ENCODE measurements at regions of chr19 and their contacts with region 1.

Region 1: DNA sequence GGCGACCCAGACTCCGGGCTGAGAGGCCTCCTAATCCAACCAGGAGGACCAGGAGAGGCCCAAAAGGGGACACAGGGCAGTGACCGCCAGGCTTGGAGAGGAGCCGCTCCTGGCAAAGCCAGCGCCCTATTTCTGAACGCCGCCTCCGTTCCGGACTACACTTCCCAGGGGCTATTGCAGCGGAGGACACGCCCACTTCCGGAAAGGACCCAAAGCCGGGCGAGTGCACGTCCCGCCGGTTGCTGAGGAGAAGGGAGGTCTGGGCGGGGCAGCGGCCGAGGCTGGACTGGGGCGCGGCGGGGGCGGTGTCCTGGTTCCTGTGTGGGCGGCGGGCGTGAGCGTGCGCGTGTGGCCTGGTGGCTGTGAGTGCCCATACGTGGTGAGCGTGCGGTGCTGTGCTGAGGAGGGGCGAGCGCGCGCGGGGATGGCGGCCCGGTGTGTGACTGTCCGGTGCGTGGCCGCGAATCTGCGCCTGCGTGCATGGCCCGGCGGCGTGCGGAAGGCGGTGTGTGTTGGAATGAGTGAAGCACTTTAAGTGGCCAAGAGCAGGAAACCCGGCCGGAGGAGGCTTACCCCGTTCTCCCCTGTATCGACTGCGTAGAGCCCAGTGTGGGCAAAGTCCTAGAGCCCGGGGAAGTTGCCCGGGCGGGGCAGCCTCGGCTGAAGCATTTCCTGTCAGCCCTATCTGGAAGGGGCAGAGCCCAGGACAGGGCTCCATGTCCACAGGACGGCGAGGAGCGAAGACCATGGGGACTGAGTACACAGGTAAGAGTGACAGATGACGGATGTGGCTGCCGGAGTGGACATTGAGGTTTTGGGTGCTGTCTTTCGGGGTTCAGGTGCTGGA is at the start of gene ZNF470:
- DNase-seq: peak; percentile 96
- H3K4me3 Mint-ChIP-seq: peak within 1 kb of the TSS; percentile 97
- H3K27ac Mint-ChIP-seq: peak within 1 kb of the TSS; percentile 90
- H3K4me1 Mint-ChIP-seq: peaks cover 7% of the 10 kb centered on the region
- H3K27me3 Mint-ChIP-seq: no peaks in the 10 kb centered on the region
- total RNA-seq, gene ZNF470: 1.8 and 2.0 TPM in 2 replicates

Region 2: GRCh38 chr19:56393119-56394012 is 174.1 kb before region 1 on chr19 and contains the start of gene ZNF582:
- intact Hi-C with region 1: no loop called
- DNase-seq: peak; percentile 96
- H3K4me3 Mint-ChIP-seq: peak within 1 kb of the TSS; percentile 91
- H3K27ac Mint-ChIP-seq: peak within 1 kb of the TSS; percentile 84
- H3K4me1 Mint-ChIP-seq: peaks cover 5% of the 10 kb centered on the region
- H3K27me3 Mint-ChIP-seq: no peaks in the 10 kb centered on the region
- total RNA-seq, gene ZNF582: 1.0 and 2.1 TPM in 2 replicates

Region 3: GRCh38 chr19:56403764-56404704 is 163.5 kb before region 1 on chr19 and contains the start of gene ZNF583:
- intact Hi-C with region 1: loop called (anchors 2 kb)
- DNase-seq: peak; percentile 96
- H3K4me3 Mint-ChIP-seq: peak within 1 kb of the TSS; percentile 84
- H3K27ac Mint-ChIP-seq: peak within 1 kb of the TSS; percentile 95
- H3K4me1 Mint-ChIP-seq: peaks cover 21% of the 10 kb centered on the region
- H3K27me3 Mint-ChIP-seq: no peaks in the 10 kb centered on the region
- total RNA-seq, gene ZNF583: 1.9 and 2.0 TPM in 2 replicates

Region 4: GRCh38 chr19:56491399-56491798 is 76.1 kb before region 1 on chr19:
- intact Hi-C with region 1: no loop called
- DNase-seq: no peak
- H3K4me3 Mint-ChIP-seq: no peak overlapping the region
- H3K27ac Mint-ChIP-seq: no peak overlapping the region
- H3K4me1 Mint-ChIP-seq: no peaks in the 10 kb centered on the region
- H3K27me3 Mint-ChIP-seq: no peaks in the 10 kb centered on the region

Region 5: GRCh38 chr19:56538254-56538760 is 29.2 kb before region 1 on chr19:
- intact Hi-C with region 1: loop called (anchors 1 kb)
- DNase-seq: peak; percentile 95
- H3K4me3 Mint-ChIP-seq: peak overlapping the region; percentile 86
- H3K27ac Mint-ChIP-seq: peak overlapping the region; percentile 91
- H3K4me1 Mint-ChIP-seq: peaks cover 8% of the 10 kb centered on the region
- H3K27me3 Mint-ChIP-seq: no peaks in the 10 kb centered on the region

Region 6: DNA sequence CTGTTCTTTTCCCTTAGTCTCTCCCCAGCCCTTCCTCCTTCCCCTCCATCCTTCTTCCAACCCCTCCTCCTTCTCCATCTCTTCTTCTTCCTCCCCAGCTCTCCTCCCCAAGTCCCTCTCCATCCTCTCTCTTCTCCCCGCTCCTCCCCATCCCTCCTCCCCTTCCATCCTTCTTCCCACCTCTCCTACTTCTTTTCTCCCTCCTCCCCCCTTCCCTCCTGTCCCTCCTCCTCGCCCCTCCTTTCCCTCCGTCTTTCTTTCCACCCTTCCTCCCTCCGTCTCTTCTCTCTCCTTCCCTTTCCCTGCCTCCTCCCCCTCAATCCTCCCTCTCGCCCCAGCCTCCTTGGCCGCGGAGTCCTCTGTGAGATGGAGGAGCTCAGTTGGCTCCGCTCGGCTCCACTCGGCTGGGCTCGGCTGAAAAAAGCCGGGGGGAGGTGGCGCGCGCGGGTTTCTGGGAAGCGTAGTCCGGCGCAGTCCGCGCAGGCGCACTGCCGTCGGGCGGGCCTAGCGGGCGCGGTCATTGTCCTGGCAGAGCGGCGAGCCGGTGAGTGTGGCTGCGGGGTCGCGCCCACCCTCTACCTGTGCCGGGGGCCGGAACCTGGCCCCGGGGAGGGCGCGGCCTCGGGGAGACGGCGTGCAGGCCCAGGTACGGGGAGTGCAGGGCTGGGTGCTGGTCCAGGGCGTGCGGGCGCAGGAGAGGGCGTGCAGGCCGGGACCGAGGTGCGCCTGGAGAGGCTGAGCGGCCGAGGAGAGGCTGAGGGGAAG is 27.5 kb after region 1 on chr19 and contains the start of gene ZNF71:
- intact Hi-C with region 1: loop called (anchors 1 kb)
- DNase-seq: peak; percentile 96
- H3K4me3 Mint-ChIP-seq: peak within 1 kb of the TSS; percentile 90
- H3K27ac Mint-ChIP-seq: peak within 1 kb of the TSS; percentile 60
- H3K4me1 Mint-ChIP-seq: peaks cover 12% of the 10 kb centered on the region
- H3K27me3 Mint-ChIP-seq: no peaks in the 10 kb centered on the region
- total RNA-seq, gene ZNF71: 4.2 and 5.2 TPM in 2 replicates

Region 7: DNA sequence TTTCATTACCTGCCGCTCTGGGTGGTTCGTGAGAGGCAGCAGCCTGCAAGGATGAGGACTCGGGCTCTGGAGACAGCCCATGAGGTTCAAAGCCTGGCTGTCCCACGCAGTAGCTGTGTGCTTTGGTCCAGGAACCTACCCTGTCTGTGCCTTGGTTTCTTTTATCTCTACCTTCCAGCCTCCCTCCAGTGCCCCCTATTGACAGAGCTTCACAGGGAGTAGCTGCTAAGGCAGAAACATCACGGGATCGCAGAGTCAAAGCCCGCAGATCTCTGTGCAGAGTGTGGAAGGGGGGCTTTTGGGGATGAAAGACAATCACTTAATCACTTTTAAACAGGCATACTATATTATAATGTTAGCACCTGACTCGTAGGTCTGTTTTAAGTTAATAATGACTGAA is 43.8 kb after region 1 on chr19:
- intact Hi-C with region 1: no loop called
- DNase-seq: no peak
- H3K4me3 Mint-ChIP-seq: no peak overlapping the region
- H3K27ac Mint-ChIP-seq: no peak overlapping the region
- H3K4me1 Mint-ChIP-seq: no peaks in the 10 kb centered on the region
- H3K27me3 Mint-ChIP-seq: no peaks in the 10 kb centered on the region

Measured in activated CD4-positive, alpha-beta T cell treated with anti-CD3 and anti-CD28 coated beads, Interleukin-2, amount 10 ng/mL, durations not matched to agents 24 days and 14 days (primary cell).